Left colon (tissue), 2 donors: ENCODE measurements at regions of chr18 and their contacts with region 1.

Region 1: GRCh38 chr18:55243857-55244256 is 284.6 kb upstream of the CCDC68 start:
- DNase-seq: no peak
- ATAC-seq: no peak

Region 2: DNA sequence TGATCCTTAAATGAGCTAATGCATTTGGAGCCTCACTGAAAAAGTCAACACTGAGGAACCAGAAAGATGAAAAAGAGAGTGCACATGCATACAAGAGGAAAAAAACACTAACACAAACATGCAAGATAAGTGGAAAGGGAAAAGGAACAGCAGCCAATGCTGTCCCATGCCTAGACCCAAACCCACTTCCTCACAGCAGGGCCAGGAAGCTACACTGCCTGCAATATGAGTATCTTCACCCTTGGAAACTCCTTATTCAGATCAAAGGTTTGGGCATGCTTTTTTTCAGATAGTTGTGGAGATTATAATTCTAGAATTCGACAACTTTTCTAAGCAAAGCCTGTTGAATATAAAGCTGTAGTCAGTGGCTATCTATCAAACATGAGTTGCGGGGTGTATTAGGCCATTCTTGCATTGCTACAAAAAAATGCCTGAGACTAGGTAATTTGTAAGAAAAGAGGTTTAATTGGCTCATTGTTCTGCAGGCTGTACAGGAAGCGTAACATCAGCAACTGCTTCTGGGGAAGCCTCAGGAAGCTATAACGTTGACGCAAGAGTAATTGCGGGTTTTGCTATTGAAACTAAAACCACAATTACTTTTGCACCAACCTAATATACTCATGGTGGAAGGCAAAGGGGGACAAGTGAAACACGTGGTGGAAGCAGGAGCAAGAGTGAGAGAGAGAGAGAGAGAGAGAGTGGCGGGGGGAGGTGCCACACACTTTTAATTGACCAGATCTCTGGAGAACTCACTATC is 1157.6 kb before region 1 on chr18:
- intact Hi-C with region 1: no loop called
- DNase-seq: no peak
- ATAC-seq: no peak

Region 3: GRCh38 chr18:55307505-55307904 is 63.6 kb after region 1 on chr18:
- intact Hi-C with region 1: no loop called
- DNase-seq: no peak
- ATAC-seq: no peak

Region 4: GRCh38 chr18:55405893-55406406 is 162.1 kb after region 1 on chr18:
- intact Hi-C with region 1: loop called in 1 of 2 experiments (anchors 10 kb)
- DNase-seq: peak; percentile 37 to 43
- ATAC-seq: no peak

Region 5: DNA sequence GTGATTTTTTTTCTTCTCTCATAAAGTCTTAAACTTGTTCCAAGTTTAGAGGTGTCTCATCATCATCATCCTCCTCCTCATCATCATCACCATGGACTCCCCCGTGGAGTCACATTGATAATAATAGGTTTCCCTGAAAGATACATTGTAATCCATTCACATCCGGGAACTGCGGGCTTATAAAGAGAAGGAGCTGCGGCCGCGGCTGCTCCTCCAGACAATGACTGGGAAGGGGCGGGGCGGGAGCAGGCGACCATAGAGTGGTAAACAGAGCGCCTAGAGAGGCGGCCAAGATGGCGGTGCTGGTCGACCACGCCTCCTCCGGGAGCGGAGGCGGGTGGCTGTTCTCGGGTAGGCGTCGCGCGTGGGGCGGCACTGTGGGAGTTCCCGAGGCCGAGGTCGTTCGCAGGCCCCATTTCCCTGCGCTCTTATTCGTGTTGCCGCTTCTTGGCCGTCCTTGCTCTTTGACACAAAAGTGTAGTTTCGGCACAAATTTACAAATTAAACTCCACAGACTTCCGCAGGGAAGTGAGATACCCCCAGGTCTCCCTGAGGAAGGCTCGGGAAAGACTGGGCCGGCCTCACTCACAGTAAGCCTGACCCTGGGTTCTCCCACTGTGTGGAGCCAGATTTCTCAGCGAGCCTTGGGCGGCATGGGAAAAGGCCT is 345.9 kb after region 1 on chr18:
- intact Hi-C with region 1: loop called in 1 of 2 experiments (anchors 10 kb)
- DNase-seq: peak; percentile 92 to 94
- ATAC-seq: peak; percentile 98

Region 6: DNA sequence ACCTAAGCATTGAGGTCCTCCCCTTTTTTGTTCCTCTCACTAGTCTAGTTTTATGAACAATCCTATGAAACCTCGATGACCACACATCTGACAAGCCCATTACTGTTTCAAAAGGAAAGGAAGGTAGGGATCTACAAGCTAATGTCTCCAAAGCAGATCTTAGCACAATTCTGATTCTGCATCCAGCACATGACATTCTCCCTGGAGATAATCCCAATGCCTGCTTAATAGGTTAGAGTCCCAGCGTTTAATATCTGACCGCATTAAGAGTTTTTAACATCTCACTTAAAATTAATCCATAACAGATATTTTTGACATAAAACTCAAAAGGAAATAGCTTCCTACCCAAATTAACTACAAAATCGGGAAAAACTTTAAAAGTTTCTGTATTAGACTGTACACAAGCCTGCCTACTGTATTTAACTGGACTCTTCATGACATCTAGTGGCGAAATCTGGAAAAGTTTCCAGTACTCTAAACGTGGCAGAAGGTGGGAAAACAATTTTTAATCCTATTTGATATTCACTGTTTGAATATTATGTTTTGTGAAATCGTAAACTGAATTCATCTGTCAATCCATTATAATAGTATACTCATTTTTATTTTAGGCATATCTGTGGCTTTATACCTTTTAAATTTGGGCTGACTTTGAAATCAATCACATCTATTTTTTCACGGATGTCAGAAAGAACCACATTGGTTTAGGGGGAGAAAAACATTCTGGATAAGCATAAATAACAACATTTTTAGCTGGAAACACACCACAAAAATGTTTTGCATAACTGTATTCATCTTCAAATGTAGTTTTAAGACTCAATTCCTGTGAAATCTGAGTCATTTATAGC is 1332.2 kb after region 1 on chr18:
- intact Hi-C with region 1: loop called in 1 of 2 experiments (anchors 5 kb)
- DNase-seq: no peak
- ATAC-seq: peak; percentile 64